ENCODE measurements at regions of chr4 and their contacts with region 1.

Region 1: GRCh38 chr4:17469931-17470649 is 41.8 kb downstream of the QDPR start:
- DNase-seq: no peak

Region 2: DNA sequence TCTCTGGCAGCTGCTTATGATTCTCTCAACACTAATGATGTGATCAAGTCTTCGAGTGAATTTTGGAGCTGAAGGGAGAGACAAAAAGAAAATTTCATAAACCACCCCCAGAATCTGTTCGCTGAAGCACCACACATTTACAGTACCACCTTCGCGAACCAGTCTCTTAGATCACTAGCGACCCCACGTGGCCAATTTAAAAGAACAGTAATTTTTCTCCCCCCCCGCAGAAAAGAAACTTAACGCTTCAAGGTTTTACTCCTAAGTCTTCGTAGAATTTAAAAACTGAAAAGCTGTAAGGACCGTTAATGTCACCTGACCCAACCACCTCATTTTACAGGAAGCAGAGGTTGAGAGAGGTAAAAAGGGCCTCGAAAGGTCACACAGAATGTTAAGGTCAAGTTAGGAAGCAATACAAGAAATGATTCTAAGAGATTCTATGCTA is 145.7 kb before region 1 on chr4:
- intact Hi-C with region 1: no loop called
- DNase-seq: no peak

Region 3: DNA sequence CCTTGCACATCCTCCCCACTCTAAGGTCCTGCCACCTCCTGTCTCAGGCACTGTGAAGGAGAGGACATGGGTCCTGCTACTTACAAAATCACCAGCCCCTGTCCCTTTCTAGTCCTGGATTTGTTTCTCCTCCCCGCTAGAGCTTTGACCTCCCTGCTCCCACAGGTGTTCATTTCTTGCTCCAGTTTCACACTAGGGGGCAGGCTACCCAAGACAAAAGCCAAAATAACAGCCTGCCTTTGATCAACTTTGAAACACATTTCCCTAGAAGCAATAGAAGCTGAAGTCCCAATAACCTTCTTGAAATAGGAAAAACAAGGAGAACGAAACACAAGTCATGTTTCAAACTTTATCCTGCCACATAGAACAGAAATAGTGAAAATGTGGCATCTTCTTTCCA is 122.6 kb before region 1 on chr4:
- intact Hi-C with region 1: loop called (anchors 5 kb)
- DNase-seq: no peak

Region 4: DNA sequence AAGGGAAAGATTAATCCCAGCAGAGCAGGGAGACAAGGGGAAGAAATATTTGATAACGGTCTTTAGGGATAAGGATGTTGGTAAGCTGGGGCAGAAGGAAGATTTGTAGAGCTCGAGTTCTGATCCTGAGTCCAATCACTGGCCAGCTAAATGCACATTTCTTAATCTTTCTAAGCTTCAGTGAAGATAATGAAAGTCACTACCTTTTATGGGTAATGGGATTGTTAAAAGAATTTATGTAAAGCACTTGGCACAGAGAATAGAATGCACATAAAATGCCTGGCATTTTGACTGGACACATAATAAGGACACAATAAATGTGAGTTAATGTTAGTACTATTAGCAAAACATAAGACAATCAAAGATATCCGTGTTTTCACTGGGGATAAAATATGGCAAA is 383.9 kb after region 1 on chr4:
- intact Hi-C with region 1: no loop called
- DNase-seq: no peak

Measured in cardiac septum (tissue), 1 donor.